Dorsolateral prefrontal cortex (tissue), 120 donors: ENCODE measurements at regions of chr9 and their contacts with region 1.

Region 1: GRCh38 chr9:36698984-36699383 is 126.3 kb downstream of the MELK start:
- DNase-seq: no peak
- H3K4me3 ChIP-seq: no peak overlapping the region
- H3K27ac ChIP-seq: no peak overlapping the region
- H3K27me3 ChIP-seq: peaks cover 0 to 12% (median 0%) of the 10 kb centered on the region in 45 donors
- CTCF ChIP-seq: no peak

Region 2: DNA sequence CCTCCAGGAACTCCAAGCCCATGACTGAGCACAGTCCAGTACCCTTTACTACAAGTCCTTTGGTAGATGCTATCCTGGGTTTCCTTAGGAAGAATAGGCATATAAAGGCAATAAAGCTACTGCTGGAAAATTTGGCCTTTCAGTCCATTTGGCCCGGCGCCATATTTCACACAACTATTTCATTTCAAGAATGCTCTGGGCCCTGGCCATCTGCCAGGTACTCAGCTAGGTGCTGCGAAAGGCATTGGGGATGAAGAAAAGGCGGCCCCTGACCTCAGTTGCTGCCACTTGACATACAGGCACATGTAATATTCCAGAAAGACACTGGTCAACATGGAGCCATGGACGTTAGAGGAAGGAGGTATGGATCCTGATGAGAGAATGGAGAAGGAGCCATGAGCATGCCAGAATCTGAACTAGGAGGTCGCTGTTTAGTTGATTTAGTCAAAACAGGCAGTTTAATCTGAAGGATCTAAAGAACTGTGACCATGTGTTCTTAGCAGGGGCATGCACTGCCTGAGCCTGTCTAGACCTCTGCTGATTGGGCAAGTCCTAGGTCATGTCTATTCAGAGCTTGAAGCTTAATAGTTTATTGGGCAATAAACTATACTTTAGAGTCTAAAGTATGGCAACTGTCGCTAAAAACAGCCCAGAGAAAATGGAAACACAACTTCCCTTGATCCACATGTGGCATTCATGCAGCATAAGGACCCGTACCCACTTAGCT is 23.0 kb after region 1 on chr9:
- intact Hi-C with region 1: loop called in 1 of 2 experiments (anchors 2 kb)
- DNase-seq: no peak
- H3K4me3 ChIP-seq: no peak overlapping the region
- H3K27ac ChIP-seq: no peak overlapping the region
- H3K27me3 ChIP-seq: peaks cover 0 to 10% (median 0%) of the 10 kb centered on the region in 45 donors
- CTCF ChIP-seq: no peak